ENCODE measurements at regions of chr19 and their contacts with region 1.

Region 1: DNA sequence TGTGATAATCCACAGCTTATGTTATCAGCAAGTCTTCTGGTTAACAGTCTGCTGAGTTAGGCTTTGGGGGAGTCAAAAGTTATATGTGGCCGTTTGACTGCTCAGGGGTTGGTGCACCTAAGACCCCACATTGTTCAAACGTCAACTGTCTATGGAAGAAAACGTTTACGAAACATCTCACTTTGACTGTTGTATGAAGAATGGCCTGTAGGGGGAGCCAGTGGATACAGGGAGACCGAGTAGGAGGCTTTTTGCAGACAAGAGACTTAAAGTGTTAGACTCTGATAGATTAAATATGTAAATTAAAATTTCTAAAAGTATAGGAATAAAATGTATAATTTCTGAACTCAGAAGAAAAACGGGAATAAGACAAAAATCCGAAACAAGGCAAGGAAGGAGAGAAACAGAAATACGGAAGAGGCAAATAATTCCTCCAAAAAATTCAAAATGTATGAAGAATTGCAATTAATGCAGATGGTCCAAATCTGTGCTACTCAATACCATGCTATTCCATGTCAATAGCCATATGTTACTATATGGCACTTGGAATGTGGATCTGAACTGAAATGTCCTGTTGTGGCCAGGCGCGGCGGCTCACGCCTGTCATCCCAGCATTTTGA is 37.8 kb downstream of the TNFSF14 start:
- DNase-seq: no peak
- H3K4me3 ChIP-seq: no peak overlapping the region
- CTCF ChIP-seq: peak; percentile 77

Region 2: GRCh38 chr19:6516659-6517291 is 115.3 kb before region 1 on chr19:
- CTCF ChIA-PET with region 1: interaction called, 93 read pairs
- POLR2A ChIA-PET with region 1: interaction called, 3 read pairs
- DNase-seq: peak; percentile 3
- H3K4me3 ChIP-seq: peak overlapping the region; percentile 73
- CTCF ChIP-seq: peak; percentile 98

Region 3: GRCh38 chr19:6610934-6611852 is 20.9 kb before region 1 on chr19:
- CTCF ChIA-PET with region 1: interaction called, 21 read pairs
- POLR2A ChIA-PET with region 1: no interaction called
- DNase-seq: peak; percentile 96
- H3K4me3 ChIP-seq: no peak overlapping the region
- CTCF ChIP-seq: no peak

Region 4: GRCh38 chr19:6648141-6648715 is 16.1 kb after region 1 on chr19:
- CTCF ChIA-PET with region 1: interaction called, 12 read pairs
- POLR2A ChIA-PET with region 1: no interaction called
- DNase-seq: no peak
- H3K4me3 ChIP-seq: no peak overlapping the region
- CTCF ChIP-seq: no peak

Region 5: DNA sequence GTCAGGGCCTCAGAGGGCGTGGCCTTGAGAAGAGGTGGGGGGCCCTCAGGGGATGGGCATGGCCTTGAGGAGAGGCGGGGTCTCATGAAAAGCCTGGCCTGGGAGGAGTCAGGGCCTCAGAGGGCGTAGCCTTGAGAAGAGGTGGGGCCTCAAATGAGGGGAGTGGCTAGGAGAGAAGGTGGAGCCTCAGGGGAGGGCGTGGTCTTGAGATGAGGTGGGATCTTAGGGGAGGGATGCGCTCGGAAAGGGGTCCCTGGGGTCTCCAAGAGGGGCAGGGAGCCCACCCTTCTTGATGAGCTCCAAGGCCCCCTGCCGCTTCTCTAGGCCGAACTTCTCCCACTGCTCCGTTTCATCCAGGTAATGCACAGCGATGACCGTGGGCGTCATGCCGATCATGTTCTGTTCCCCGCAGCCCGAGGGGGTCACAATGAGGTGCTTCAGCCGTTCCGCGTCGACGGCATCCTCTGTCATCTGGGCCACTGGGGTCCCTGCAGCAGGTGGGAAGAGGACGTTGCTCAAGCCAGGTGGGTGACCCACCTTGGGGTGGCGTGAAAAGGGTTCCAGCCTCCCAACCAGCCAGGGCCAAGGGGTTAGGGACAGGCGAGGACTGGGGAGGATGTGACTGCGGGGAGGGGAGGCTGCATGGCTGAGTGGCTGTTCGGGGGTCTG is 62.2 kb after region 1 on chr19:
- CTCF ChIA-PET with region 1: no interaction called
- POLR2A ChIA-PET with region 1: no interaction called
- DNase-seq: no peak
- H3K4me3 ChIP-seq: no peak overlapping the region
- CTCF ChIP-seq: no peak

Region 6: DNA sequence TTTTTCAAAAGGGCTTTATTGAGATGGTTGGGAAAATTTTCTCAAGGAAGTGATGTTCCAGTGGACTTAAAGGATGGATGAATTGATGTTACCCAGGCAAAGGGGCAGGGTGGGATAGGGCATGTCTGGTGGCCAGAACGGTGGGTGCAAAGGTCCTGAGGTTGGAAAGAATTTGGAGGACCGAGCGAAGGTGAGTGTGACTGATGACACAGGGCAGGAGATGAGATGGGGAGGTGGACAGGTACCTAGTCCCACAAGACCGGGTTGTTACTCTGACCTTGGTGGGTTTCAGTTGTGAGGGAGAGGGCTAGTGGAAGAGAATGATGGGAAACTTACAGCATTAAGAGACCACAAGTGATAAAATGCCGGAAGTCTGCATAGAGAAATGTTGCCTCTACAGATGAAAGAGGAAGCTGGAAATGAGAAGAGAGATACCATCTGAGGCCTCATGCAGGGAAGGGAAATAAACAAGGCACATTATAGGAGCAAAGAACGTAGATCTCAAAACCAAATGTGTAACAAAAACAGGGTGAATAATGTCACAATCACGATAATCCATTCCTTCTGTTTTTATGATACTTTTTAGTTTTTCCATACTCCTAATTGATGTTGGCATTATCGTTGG is 259.8 kb after region 1 on chr19:
- CTCF ChIA-PET with region 1: no interaction called
- POLR2A ChIA-PET with region 1: no interaction called
- DNase-seq: no peak
- H3K4me3 ChIP-seq: no peak overlapping the region
- CTCF ChIP-seq: no peak

Measured in AG04449 (cell line).